Calu3 (cell line): ENCODE measurements at regions of chr1 and their contacts with region 1.

Region 1: DNA sequence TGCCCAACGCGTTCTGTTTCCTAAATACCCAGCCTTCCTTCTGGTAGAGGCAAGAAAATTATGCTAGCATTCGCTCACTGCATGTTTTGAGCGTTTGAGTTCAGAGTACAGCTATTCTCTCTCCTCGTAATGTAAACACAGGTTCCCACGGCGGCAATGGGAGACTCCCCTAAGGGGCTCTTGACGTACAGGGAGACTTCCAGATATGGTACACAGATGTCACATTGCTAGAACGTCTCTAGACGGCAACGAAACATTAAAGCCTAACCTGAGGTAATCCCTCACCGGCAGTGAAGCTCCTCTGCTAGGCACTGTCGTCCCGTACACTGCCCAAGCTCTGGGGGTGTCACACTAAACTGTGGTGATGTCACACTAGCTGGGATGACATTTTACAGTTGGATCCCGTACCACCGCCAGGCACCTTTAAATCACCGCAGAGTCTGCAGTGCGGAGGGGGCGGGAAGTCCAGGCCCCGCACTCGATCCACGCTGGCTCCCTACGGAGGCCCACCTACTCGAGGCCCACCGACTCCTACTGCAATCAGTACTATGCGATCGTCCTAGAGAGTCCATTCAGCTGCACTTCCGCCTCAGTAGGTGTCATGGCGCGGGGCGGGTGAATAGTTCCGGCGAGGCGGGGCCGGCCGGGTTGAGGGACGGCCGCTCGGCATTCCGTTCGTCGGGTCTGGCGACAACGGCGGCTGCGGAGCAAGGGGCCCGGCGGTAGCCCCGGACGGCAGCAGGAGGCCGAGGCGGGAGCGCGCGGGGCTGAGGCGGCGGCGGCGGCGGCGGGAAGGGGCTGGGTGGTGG is at the start of gene HIPK1:
- DNase-seq: peak; percentile 89
- H3K4me3 Mint-ChIP-seq: peak within 1 kb of the TSS; percentile 85
- H3K27ac Mint-ChIP-seq: peak within 1 kb of the TSS; percentile 89
- H3K4me1 Mint-ChIP-seq: peaks cover 46% of the 10 kb centered on the region
- H3K27me3 Mint-ChIP-seq: no peaks in the 10 kb centered on the region
- CTCF ChIP-seq: no peak
- total RNA-seq, gene HIPK1: 42.7 and 43.2 TPM in 2 replicates

Region 2: DNA sequence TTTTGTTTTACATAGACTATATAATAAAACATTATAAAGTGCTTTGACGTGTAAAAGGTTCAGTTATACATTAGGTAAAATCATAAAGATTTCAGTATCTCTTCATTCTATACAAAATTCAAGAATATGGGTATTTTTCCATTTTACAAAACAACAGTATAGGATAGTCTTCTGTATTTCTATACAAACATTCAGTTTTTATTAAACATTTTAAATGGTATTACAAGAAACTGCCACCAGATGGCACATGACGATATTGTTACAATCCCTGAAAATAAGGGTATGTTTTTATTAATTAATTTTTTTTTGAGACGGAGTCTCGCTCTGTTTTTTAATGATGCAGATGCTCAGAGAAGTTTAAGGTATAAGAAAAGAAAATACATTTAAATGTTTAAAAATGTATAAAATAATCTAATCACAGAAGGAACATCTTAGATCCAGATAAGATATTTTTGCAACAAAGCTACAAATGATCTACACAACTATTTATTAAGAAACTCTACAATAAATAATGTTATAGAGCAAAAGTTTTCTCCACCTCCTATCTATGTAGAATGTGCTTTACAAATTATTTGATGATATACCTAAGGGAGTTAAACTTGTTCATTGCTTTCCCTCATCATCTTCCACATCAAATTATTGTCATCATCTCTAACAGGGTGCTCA is 93.4 kb before region 1 on chr1:
- CTCF ChIA-PET with region 1: no interaction called
- intact Hi-C with region 1: loop called (anchors 1 kb)
- DNase-seq: peak; percentile 8
- H3K4me3 Mint-ChIP-seq: no peak overlapping the region
- H3K27ac Mint-ChIP-seq: no peak overlapping the region
- H3K4me1 Mint-ChIP-seq: no peaks in the 10 kb centered on the region
- H3K27me3 Mint-ChIP-seq: no peaks in the 10 kb centered on the region
- CTCF ChIP-seq: no peak

Region 3: DNA sequence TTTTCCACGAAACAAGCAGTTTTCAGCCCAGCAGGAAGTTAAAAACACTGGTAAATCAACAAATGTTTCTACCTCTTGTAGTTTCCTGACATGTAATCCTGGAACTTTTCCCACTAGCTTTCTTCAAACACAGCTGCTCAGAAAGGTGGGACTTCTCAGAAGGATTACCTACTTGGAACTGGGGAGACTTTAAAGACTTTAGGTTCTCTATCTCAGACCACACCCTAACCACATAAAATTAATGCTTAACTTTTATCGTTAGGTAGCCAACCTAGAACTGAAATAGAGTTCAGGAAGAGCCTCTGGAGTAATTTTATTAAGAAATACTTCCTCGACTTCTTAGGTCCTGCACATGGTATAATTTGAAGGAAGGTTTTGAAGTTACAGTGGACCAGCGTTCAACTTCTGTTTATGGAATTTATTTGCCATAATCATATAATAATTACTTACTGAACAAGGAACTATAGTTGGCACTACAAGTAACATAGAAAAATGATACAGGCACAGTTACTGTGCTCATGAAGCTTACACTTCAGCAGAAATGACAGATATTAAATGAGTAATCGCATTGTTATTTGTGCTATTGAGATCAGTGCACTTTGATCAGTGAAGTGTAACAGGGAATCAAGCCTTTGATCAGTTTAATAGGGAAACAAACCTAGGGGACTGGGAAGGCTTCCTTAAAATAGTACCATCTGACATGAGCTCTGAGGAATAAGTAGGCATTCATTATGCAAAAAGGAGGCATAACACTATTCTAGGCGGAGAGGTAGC is 41.6 kb before region 1 on chr1 and contains the start of gene BCL2L15:
- CTCF ChIA-PET with region 1: interaction called, 3 read pairs
- intact Hi-C with region 1: loop called (anchors 1 kb)
- DNase-seq: peak; percentile 14
- H3K4me3 Mint-ChIP-seq: peak within 1 kb of the TSS; percentile 77
- H3K27ac Mint-ChIP-seq: peak within 1 kb of the TSS; percentile 87
- H3K4me1 Mint-ChIP-seq: peaks cover 20% of the 10 kb centered on the region
- H3K27me3 Mint-ChIP-seq: no peaks in the 10 kb centered on the region
- CTCF ChIP-seq: no peak
- total RNA-seq, gene BCL2L15: 13.0 and 16.8 TPM in 2 replicates

Region 4: GRCh38 chr1:113904674-113905434 is 24.3 kb before region 1 on chr1 and contains the starts of genes AP4B1 and DCLRE1B:
- CTCF ChIA-PET with region 1: interaction called, 15 read pairs
- intact Hi-C with region 1: loop called (anchors 1 kb)
- DNase-seq: peak; percentile 96
- H3K4me3 Mint-ChIP-seq: peak within 1 kb of the TSS; percentile 86
- H3K27ac Mint-ChIP-seq: peak within 1 kb of the TSS; percentile 85
- H3K4me1 Mint-ChIP-seq: no peaks in the 10 kb centered on the region
- H3K27me3 Mint-ChIP-seq: no peaks in the 10 kb centered on the region
- CTCF ChIP-seq: peak; percentile 58
- total RNA-seq, gene AP4B1: 18.3 and 21.0 TPM in 2 replicates
- total RNA-seq, gene DCLRE1B: 6.9 and 7.5 TPM in 2 replicates